ENCODE measurements at regions of chr17 and their contacts with region 1.

Region 1: DNA sequence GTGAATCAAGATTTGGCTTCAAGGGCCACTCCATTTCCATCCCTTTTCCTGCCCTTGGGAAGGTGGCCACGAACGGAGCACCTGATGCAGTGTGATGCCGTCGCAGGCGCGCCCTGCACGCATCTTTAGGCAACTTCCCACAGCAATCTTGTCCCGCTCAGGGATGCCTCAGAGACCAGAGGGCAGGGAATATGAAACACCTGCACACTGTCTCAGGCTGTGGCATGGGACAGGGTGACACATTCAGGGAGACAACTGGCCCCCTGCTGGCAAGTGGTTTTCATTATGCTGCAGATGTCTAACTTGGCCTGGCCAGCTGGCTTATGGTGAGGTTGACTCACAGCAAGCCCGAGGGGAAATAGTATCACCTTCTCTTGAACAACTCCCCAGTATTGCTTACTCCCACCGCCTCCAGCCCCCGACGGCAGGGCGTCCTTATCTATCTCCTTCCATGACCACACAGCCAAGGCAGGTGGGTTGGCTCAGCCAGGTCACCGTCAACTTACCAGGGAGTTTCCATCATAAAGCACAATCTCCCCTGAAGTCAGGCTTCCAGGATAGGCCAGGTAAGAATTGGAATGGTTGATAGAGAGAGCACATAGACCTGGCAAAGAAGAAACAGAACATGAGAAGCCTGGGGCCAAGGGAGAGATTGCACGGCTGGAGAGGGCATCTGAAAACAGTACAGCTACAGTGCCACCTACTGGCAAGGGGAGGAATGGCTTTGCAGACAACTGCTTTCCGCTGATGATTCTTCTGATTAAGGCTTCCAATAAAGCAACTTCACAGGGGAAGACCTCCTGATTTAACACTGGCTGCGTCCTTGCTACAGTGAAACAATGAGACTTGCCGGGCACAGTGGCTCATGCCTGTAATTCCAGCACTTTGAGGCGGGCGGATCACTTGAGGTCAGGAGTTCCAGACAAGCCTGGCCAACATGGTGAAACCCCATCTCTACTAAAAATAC is 21.1 kb downstream of the WIPI1 start:
- DNase-seq: peak; percentile 82 to 84 (median 83)
- H3K4me3 ChIP-seq: no peak overlapping the region
- H3K4me3 Mint-ChIP-seq: peak overlapping the region in 7 of 8 donors; percentile 36 to 91 (median 67)
- H3K27ac ChIP-seq: no peak overlapping the region
- H3K27ac Mint-ChIP-seq: peak overlapping the region; percentile 79 to 97 (median 88)
- H3K4me1 ChIP-seq: peaks cover 51% of the 10 kb centered on the region
- H3K4me1 Mint-ChIP-seq: peaks cover 37 to 60% (median 45%) of the 10 kb centered on the region in 4 donors
- H3K27me3 ChIP-seq: no peaks in the 10 kb centered on the region
- H3K27me3 Mint-ChIP-seq: no peaks in the 10 kb centered on the region

Region 2: DNA sequence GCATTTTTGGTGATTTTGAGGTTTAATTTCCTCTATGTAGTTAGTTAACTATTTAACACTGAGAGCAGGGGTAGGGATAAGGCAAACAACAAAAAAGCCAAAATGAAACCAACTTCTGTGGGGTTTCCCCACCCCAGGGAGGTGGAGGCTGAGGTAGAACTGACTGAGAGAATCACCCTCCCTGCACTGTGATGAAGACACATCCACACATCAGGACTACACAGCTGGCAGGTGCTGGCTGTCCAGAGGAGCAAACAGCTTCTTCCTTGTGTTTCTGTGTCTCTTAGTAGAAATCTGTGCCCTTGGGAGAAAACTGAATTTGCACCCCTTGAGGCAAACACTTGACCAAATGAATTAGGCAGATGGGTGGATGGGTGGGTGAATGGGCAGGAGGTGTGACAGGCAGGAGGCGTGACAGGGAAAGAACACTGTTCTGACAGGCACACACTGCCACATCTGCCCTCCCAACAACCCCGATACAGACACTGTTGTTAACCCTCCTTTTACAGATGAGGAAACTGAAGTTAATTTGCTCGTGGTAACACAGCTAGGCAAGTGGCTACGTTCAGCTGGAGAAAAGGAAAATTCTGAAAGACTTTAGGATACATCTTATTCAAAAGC is 251.2 kb before region 1 on chr17:
- CTCF ChIA-PET with region 1: interaction called, 15 read pairs
- POLR2A ChIA-PET with region 1: interaction called, 13 read pairs
- intact Hi-C with region 1: no loop called
- DNase-seq: peak; percentile 69 to 84 (median 75)
- H3K4me3 ChIP-seq: peak overlapping the region; percentile 1 to 54
- H3K4me3 Mint-ChIP-seq: peak overlapping the region; percentile 78 to 100 (median 94)
- H3K27ac ChIP-seq: peak overlapping the region; percentile 80
- H3K27ac Mint-ChIP-seq: peak overlapping the region; percentile 90 to 96 (median 95)
- H3K4me1 ChIP-seq: peaks cover 73% of the 10 kb centered on the region
- H3K4me1 Mint-ChIP-seq: peaks cover 46 to 89% (median 65%) of the 10 kb centered on the region in 4 donors
- H3K27me3 ChIP-seq: no peaks in the 10 kb centered on the region
- H3K27me3 Mint-ChIP-seq: no peaks in the 10 kb centered on the region

Region 3: DNA sequence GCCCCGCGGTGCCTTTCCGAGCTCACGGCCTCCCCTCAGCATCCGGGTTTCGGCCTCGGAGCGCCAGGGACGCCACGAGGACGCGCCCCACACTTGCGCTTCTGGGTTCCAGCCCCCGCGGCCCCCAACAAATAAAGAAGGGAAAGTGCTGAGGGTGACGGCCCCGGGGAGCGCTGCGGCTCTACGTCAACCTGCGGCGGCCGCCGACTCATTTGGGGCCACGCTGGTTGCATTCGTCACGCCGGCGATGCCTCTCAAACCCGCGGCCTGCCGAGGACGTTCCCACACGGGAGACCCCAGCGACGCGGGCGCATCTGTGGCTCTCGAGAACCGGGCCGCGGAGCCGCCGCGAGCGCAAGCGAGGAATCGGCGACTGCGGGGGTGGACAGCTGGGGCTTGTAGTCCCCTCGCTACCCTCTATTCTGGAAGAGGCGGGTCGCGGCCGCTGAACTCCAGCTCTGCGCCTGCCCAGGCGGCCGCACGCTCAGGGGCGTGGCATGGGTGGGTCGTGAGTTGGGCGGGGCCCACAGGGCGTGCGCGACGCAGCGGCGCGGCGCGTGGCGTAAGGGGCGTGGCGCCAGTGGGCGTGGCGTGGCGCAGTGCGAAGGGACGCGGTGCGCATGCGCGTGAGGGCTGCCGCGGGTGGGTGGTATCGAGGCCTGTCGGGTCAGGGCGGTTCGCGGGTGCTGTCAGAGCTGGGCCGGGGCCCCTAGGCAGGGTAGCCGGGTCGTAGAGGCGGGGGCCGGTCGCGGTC is 188.5 kb before region 1 on chr17 and contains the start of gene AMZ2:
- CTCF ChIA-PET with region 1: interaction called, 9 read pairs
- POLR2A ChIA-PET with region 1: interaction called, 11 read pairs
- intact Hi-C with region 1: no loop called
- DNase-seq: peak; percentile 94 to 99 (median 97)
- H3K4me3 ChIP-seq: peak within 1 kb of the TSS; percentile 76 to 95
- H3K4me3 Mint-ChIP-seq: peak within 1 kb of the TSS; percentile 85 to 94 (median 94)
- H3K27ac ChIP-seq: peak within 1 kb of the TSS; percentile 99
- H3K27ac Mint-ChIP-seq: peak within 1 kb of the TSS; percentile 97 to 99 (median 99)
- H3K4me1 ChIP-seq: peaks cover 37% of the 10 kb centered on the region
- H3K4me1 Mint-ChIP-seq: peaks cover 33 to 59% (median 37%) of the 10 kb centered on the region in 4 donors
- H3K27me3 ChIP-seq: no peaks in the 10 kb centered on the region
- H3K27me3 Mint-ChIP-seq: no peaks in the 10 kb centered on the region
- total RNA-seq, gene AMZ2: 66.1 to 81.2 TPM

Region 4: GRCh38 chr17:68346448-68346847 is 89.7 kb before region 1 on chr17:
- CTCF ChIA-PET with region 1: interaction called, 7 read pairs
- POLR2A ChIA-PET with region 1: interaction called, 12 read pairs
- intact Hi-C with region 1: no loop called
- DNase-seq: peak; percentile 57 to 73 (median 63)
- H3K4me3 ChIP-seq: peak overlapping the region; percentile 1 to 36
- H3K4me3 Mint-ChIP-seq: peak overlapping the region; percentile 67 to 91 (median 82)
- H3K27ac ChIP-seq: peak overlapping the region; percentile 62
- H3K27ac Mint-ChIP-seq: peak overlapping the region; percentile 92 to 96 (median 93)
- H3K4me1 ChIP-seq: peaks cover 76% of the 10 kb centered on the region
- H3K4me1 Mint-ChIP-seq: peaks cover 53 to 82% (median 70%) of the 10 kb centered on the region in 4 donors
- H3K27me3 ChIP-seq: no peaks in the 10 kb centered on the region
- H3K27me3 Mint-ChIP-seq: no peaks in the 10 kb centered on the region

Region 5: GRCh38 chr17:68398691-68399637 is 37.2 kb before region 1 on chr17:
- CTCF ChIA-PET with region 1: interaction called, 17 read pairs
- POLR2A ChIA-PET with region 1: interaction called, 7 read pairs
- intact Hi-C with region 1: loop called (anchors 5 kb)
- DNase-seq: no peak
- H3K4me3 ChIP-seq: no peak overlapping the region
- H3K4me3 Mint-ChIP-seq: peak overlapping the region in 5 of 8 donors; percentile 5 to 61 (median 40)
- H3K27ac ChIP-seq: no peak overlapping the region
- H3K27ac Mint-ChIP-seq: peak overlapping the region in 5 of 7 donors; percentile 46 to 79 (median 60)
- H3K4me1 ChIP-seq: peaks cover 38% of the 10 kb centered on the region
- H3K4me1 Mint-ChIP-seq: peaks cover 27 to 44% (median 34%) of the 10 kb centered on the region in 4 donors
- H3K27me3 ChIP-seq: no peaks in the 10 kb centered on the region
- H3K27me3 Mint-ChIP-seq: no peaks in the 10 kb centered on the region

Region 6: DNA sequence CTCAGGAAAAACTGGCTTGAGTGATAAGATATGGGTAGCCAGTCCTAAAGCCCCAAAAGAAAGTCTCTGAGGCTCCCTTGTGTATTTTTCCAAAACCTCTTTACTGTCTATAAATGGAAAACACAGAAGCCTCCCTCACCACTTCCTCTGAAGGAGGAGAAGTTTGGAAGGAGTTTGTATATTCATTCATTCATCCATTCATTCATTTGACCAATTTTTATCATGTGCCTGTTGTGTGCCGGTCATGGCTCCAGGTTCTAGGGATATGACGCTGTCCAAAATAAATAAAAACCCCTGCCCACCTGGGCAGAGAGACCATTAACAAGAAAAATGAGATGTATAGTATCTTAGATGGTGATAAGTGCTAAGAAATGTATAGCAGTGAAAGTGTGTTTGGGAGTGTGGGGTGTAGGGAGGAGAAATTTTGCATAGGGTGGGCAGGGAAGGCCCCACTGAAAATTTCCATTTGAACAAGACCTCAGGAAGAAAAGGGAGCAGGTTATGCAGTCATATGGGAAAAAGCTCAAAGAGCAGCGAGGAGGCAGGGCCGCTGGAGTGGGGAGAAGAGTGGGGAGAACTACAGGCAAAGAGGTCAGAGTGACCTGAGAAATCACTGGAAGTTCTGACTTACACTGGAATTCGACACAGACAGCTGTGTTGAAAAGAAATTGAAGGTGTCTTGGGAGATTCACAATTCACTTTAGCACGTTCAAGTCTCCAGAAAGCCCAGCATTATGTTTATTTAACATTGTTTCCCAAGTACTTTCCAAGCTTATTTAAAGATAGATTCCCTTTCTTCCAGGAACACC is 27.3 kb after region 1 on chr17:
- CTCF ChIA-PET with region 1: interaction called, 142 read pairs
- POLR2A ChIA-PET with region 1: interaction called, 107 read pairs
- intact Hi-C with region 1: loop called (anchors 1 kb)
- DNase-seq: no peak
- H3K4me3 ChIP-seq: no peak overlapping the region
- H3K4me3 Mint-ChIP-seq: peak overlapping the region in 1 of 8 donors; percentile 59
- H3K27ac ChIP-seq: no peak overlapping the region
- H3K27ac Mint-ChIP-seq: peak overlapping the region in 5 of 7 donors; percentile 18 to 90 (median 66)
- H3K4me1 ChIP-seq: peaks cover 41% of the 10 kb centered on the region
- H3K4me1 Mint-ChIP-seq: peaks cover 34 to 47% (median 39%) of the 10 kb centered on the region in 4 donors
- H3K27me3 ChIP-seq: no peaks in the 10 kb centered on the region
- H3K27me3 Mint-ChIP-seq: no peaks in the 10 kb centered on the region

Measured in CD4-positive, alpha-beta memory T cell (primary cell).